ENCODE measurements at regions of chr2 and their contacts with region 1.

Region 1: DNA sequence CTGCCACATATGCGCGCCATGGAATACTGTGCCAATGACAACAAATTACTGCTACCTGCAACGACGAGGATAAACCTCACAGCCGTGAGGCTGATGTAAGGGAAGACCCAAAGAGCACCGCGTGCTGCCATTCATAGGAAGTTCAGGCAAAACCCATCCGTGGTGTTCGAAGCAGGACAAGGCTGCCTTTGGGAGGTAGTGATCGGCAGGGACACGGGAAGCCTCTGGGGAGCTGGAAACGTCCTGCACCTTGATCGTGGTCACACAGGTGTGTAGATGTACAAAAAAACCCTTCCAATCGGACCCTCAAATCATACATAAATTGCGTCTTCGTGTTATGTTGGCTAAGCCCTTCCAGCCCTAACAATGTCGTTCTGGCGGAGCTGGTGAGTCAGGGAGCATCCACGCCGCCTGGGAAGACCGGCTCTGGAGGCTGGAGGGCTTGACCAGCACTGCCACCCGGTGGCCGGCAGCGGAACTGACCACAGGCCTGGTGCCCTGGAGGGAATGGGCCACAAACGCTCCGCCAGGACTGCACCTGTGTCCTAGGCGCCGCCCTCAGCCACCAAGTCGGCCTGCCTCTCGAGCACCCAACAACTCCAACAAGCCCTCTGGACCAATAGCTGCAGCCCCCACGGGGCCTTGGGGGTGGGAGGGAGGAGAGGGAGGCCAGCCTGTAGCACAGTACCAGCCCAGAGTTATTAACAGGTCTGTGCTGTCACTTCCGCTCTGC is 4.1 kb upstream of the NEURL3 start:
- DNase-seq: peak; percentile 64
- H3K4me3 Mint-ChIP-seq: no peak overlapping the region
- H3K27ac Mint-ChIP-seq: peak overlapping the region; percentile 73
- H3K4me1 Mint-ChIP-seq: peaks cover 26% of the 10 kb centered on the region
- H3K27me3 Mint-ChIP-seq: peaks cover 10% of the 10 kb centered on the region

Region 2: DNA sequence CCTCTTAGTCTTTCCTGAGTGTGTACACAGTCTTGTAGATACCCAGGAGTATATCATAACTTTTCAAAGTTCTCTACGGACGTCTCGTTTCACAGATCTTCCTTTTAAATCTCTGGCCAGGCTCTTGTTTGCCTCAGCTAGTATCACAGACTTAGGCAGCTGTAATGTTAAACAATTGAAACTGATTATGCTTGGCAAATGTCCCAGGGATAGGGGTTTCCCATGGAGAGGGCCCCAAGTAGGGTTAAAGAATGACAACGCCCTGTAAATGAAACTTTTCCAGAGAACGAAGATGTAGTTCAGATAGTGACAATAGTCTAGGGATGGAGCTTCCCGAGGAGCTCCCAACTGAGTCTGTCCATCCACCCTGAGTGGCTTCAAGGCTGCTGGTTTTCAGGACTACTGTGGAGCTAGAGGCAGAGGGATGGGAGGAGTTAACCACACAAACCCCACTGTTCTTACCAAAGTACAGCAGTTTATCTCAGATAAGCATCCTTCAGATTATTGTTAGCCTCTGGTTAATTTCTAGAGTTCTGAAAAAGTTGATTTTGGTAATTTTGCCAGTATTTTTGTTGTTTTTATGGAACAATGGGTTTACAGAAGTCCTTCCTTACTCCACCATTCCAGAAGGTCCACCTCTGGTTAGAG is 13.2 kb before region 1 on chr2:
- CTCF ChIA-PET with region 1: interaction called, 24 read pairs
- POLR2A ChIA-PET with region 1: no interaction called
- DNase-seq: no peak
- H3K4me3 Mint-ChIP-seq: no peak overlapping the region
- H3K27ac Mint-ChIP-seq: no peak overlapping the region
- H3K4me1 Mint-ChIP-seq: peaks cover 21% of the 10 kb centered on the region
- H3K27me3 Mint-ChIP-seq: peaks cover 2% of the 10 kb centered on the region

Region 3: DNA sequence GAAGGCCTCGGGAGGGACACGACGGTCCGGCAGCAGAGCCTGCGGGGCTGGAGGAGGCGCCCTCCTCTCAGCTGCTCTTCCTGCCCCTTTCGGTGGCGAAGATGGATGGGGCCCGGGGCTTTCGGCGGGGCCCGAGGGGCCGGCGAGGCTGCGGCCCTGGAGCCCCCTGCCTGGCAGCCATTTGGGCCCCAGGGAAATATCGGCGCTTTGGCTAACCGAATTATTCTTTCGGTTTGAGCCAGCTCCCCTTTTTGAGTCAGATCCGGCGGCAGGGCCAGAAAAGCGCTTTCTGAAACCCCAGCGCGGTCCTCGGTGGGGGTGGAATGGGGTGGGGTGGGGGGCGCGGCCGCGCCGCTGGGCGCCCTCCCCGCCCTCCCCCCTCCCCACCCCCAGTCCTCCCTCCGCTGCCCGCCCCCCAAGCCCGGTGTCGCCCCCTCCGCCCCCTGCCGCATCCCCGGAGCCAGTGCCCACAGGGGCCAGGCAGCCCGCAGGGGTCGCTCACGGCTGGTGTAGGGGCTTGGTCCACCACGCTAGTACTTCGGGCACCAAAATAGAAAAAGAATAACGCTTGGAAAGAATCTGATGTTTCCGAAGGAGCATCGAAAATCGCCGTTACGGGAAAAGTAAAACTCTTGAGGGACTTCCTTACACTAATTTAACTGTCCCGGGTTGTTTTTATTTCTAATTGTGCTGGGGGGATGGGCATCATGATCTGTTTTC is 18.2 kb after region 1 on chr2:
- CTCF ChIA-PET with region 1: interaction called, 13 read pairs
- POLR2A ChIA-PET with region 1: no interaction called
- DNase-seq: peak; percentile 73
- H3K4me3 Mint-ChIP-seq: peak overlapping the region; percentile 72
- H3K27ac Mint-ChIP-seq: peak overlapping the region; percentile 87
- H3K4me1 Mint-ChIP-seq: peaks cover 90% of the 10 kb centered on the region
- H3K27me3 Mint-ChIP-seq: no peaks in the 10 kb centered on the region

Region 4: GRCh38 chr2:96602330-96602823 is 93.1 kb after region 1 on chr2:
- CTCF ChIA-PET with region 1: no interaction called
- POLR2A ChIA-PET with region 1: no interaction called
- DNase-seq: no peak
- H3K4me3 Mint-ChIP-seq: no peak overlapping the region
- H3K27ac Mint-ChIP-seq: no peak overlapping the region
- H3K4me1 Mint-ChIP-seq: peaks cover 27% of the 10 kb centered on the region
- H3K27me3 Mint-ChIP-seq: no peaks in the 10 kb centered on the region